PC-9 (cell line): ENCODE measurements at regions of chr2 and their contacts with region 1.

Region 1: GRCh38 chr2:201007561-201007998 is 44.1 kb upstream of the ORC2 start:
- DNase-seq: peak; percentile 16 to 58
- H3K4me3 ChIP-seq: no peak overlapping the region
- H3K27ac ChIP-seq: no peak overlapping the region
- H3K4me1 ChIP-seq: no peaks in the 10 kb centered on the region
- H3K27me3 ChIP-seq: no peaks in the 10 kb centered on the region
- CTCF ChIP-seq: no peak

Region 2: DNA sequence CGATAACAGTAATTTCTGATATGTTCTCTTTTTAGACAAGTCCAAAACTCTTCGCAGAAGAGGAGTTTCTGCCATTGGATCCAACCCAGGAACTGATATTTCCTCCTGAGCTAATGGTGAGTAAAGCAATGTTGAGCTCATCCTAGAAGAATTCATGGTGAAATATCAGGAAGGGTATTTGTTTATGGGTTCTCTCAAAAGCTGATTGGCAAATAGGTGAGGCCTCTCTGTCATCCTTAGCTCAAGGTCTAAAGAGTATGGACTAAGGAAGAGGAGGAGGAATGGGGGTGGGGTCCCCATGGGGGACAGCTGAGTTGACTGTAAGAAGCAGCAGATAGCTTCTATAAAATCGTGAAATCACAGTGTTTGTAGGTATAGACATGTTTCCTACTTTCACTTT is 403.6 kb before region 1 on chr2:
- CTCF ChIA-PET with region 1: no interaction called
- POLR2A ChIA-PET with region 1: interaction called, 11 read pairs
- intact Hi-C with region 1: no loop called
- DNase-seq: peak; percentile 26 to 91
- H3K4me3 ChIP-seq: no peak overlapping the region
- H3K27ac ChIP-seq: peak overlapping the region; percentile 68
- H3K4me1 ChIP-seq: peaks cover 64% of the 10 kb centered on the region
- H3K27me3 ChIP-seq: no peaks in the 10 kb centered on the region
- CTCF ChIP-seq: no peak

Region 3: GRCh38 chr2:200828104-200828503 is 179.5 kb before region 1 on chr2:
- CTCF ChIA-PET with region 1: no interaction called
- POLR2A ChIA-PET with region 1: no interaction called
- intact Hi-C with region 1: no loop called
- DNase-seq: no peak
- H3K4me3 ChIP-seq: no peak overlapping the region
- H3K27ac ChIP-seq: no peak overlapping the region
- H3K4me1 ChIP-seq: no peaks in the 10 kb centered on the region
- H3K27me3 ChIP-seq: no peaks in the 10 kb centered on the region
- CTCF ChIP-seq: no peak

Region 4: GRCh38 chr2:201546576-201546975 is 539.0 kb after region 1 on chr2:
- CTCF ChIA-PET with region 1: no interaction called
- POLR2A ChIA-PET with region 1: no interaction called
- intact Hi-C with region 1: no loop called
- DNase-seq: no peak
- H3K4me3 ChIP-seq: no peak overlapping the region
- H3K27ac ChIP-seq: no peak overlapping the region
- H3K4me1 ChIP-seq: no peaks in the 10 kb centered on the region
- H3K27me3 ChIP-seq: no peaks in the 10 kb centered on the region
- CTCF ChIP-seq: no peak